Activated CD8-positive, alpha-beta T cell treated with anti-CD3 and anti-CD28 coated beads for 36 hours (primary cell): ENCODE measurements at regions of chr2 and their contacts with region 1.

Region 1: DNA sequence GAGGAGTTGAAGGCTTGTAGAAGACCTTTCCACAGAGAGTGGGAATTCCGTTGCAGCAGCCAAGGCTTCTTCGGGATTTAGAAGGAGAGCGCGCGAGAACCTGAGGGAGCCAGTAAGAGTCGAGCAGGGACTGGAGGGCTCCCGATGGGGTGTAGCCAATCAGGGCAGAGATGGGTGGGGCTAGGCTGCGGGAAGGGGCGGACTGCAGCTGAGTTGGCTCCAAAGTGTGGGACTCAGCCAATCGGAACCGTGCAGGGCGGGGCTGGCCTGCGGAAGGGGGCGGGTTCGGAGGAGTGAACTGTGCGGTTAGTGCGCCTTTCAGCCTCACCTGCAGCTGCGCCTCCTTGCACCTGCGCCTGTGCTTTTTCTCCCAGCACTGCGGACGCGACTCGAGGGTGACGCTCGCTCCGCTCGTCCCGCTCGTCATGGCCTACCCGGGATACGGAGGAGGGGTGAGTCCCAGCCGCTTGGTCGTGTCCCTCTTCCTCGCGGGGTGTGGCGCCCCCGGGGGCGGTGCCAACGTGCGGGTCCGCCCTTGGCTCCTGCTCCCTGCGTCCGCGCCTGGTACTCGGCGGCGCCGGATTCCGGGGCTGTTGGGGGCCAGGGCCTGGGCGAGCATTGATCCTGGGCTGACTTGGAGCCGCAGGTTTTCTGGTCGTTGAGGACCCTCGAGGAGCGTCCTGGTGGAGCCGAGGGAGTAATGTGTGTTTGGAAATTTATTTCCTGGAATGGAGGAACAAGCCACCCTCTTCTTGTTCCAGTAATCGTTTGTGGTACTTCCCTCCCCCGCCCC is at the start of gene GCA:
- DNase-seq: peak; percentile 99
- ATAC-seq: peak; percentile 98
- H3K4me3 Mint-ChIP-seq: peak within 1 kb of the TSS; percentile 83
- H3K27ac Mint-ChIP-seq: peak within 1 kb of the TSS; percentile 71
- H3K4me1 Mint-ChIP-seq: peaks cover 9% of the 10 kb centered on the region
- H3K27me3 Mint-ChIP-seq: no peaks in the 10 kb centered on the region
- CTCF ChIP-seq: no peak
- total RNA-seq, gene GCA: 23.4 to 25.2 TPM

Region 2: GRCh38 chr2:162199913-162200312 is 144.1 kb before region 1 on chr2:
- CTCF ChIA-PET with region 1: no interaction called
- POLR2A ChIA-PET with region 1: no interaction called
- intact Hi-C with region 1: no loop called
- DNase-seq: no peak
- ATAC-seq: no peak
- H3K4me3 Mint-ChIP-seq: no peak overlapping the region
- H3K27ac Mint-ChIP-seq: no peak overlapping the region
- H3K4me1 Mint-ChIP-seq: peaks cover 6% of the 10 kb centered on the region
- H3K27me3 Mint-ChIP-seq: peaks cover 16% of the 10 kb centered on the region
- CTCF ChIP-seq: no peak

Region 3: GRCh38 chr2:162333968-162334367 is 10.1 kb before region 1 on chr2:
- CTCF ChIA-PET with region 1: interaction called, 10 read pairs
- POLR2A ChIA-PET with region 1: interaction called, 3 read pairs
- intact Hi-C with region 1: no loop called
- DNase-seq: peak; percentile 52
- ATAC-seq: peak; percentile 42
- H3K4me3 Mint-ChIP-seq: no peak overlapping the region
- H3K27ac Mint-ChIP-seq: no peak overlapping the region
- H3K4me1 Mint-ChIP-seq: no peaks in the 10 kb centered on the region
- H3K27me3 Mint-ChIP-seq: no peaks in the 10 kb centered on the region
- CTCF ChIP-seq: peak; percentile 59

Region 4: DNA sequence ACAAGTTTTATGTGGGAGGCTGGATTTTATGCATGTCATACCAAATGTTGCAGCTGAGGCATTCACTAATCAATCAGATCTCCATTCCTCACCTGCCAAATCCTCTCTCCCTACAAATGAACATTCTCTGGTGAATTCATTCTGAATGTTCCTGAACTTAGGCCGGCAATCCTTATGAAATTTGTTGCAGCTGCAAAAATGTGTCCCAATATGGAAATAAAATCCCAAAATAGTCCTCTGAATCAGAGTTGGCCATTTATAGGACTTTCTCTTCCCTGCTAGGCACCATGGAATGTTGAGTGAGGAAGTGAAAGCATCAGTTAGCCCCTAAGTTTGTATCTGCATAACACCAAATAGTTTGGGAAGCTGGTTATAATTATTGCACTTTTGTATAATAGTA is 25.5 kb after region 1 on chr2:
- CTCF ChIA-PET with region 1: no interaction called
- POLR2A ChIA-PET with region 1: no interaction called
- intact Hi-C with region 1: no loop called
- DNase-seq: no peak
- ATAC-seq: no peak
- H3K4me3 Mint-ChIP-seq: no peak overlapping the region
- H3K27ac Mint-ChIP-seq: no peak overlapping the region
- H3K4me1 Mint-ChIP-seq: no peaks in the 10 kb centered on the region
- H3K27me3 Mint-ChIP-seq: peaks cover 3% of the 10 kb centered on the region
- CTCF ChIP-seq: no peak

Region 5: DNA sequence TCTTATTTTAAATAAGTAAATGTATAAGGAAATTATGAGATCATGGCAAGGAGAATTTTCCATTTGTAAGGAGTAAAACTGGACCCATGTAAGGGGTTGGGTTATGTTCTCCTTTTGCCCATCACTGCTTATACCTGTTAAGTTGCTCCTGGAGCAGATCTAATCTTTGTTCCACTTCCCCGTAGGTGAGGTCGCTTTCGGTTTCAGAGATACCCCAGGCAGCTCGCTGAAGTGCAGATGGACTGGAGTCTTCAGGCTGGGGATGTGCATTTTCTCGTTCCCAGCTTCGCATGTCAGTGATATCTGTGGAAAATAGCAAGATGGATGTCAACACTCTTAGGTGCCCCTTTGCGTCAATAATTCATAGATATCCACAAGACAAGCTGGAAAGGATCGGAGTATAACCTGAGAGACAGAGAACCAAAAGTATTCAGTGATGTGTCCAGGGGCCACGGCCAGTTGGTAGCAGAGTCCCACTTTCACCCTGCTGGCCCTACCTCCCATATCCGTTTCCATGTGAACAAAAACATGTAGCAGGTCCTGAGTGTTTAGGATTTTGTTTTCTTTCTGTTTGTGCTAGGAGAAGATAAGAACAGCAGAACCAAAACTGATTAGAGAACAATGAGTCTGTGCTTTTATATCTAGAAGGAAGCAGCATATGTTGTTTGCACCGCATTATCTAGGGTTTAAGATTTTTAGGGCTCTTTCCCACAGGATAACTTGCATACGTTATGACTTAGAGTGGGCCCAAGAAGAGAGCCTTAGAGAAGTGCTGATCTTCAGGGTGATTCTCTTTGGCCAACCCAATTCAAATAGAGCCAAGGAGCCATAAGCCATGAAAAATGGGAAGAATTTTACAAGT is 35.9 kb after region 1 on chr2:
- CTCF ChIA-PET with region 1: no interaction called
- POLR2A ChIA-PET with region 1: no interaction called
- intact Hi-C with region 1: no loop called
- DNase-seq: no peak
- ATAC-seq: no peak
- H3K4me3 Mint-ChIP-seq: no peak overlapping the region
- H3K27ac Mint-ChIP-seq: no peak overlapping the region
- H3K4me1 Mint-ChIP-seq: no peaks in the 10 kb centered on the region
- H3K27me3 Mint-ChIP-seq: peaks cover 13% of the 10 kb centered on the region
- CTCF ChIP-seq: no peak